ENCODE measurements at regions of chr4 and their contacts with region 1.

Region 1: DNA sequence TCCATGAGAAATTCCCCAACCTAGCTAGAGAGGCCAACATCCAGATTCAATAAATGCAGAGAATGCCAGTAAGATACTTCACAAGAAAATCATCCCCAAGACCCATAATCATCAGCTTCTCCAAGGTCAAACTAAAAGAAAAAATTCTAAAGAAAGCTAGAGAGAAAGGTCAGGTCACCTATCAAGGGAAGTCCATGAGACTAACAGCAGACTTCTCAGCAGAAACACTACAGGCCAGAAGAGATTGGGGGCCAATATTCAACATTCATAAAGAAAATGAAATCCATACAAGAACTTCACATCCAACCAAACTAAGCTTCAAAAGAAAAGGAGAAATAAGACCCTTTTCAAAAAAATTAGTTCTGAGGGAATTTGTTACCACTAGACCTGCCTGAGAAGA is 118.8 kb upstream of the ANXA10 start:
- DNase-seq: no peak
- H3K4me3 ChIP-seq: no peak overlapping the region
- H3K27ac ChIP-seq: no peak overlapping the region
- H3K4me1 ChIP-seq: no peaks in the 10 kb centered on the region
- H3K27me3 ChIP-seq: no peaks in the 10 kb centered on the region
- CTCF ChIP-seq: no peak
- POLR2A ChIP-seq: no peak

Region 2: DNA sequence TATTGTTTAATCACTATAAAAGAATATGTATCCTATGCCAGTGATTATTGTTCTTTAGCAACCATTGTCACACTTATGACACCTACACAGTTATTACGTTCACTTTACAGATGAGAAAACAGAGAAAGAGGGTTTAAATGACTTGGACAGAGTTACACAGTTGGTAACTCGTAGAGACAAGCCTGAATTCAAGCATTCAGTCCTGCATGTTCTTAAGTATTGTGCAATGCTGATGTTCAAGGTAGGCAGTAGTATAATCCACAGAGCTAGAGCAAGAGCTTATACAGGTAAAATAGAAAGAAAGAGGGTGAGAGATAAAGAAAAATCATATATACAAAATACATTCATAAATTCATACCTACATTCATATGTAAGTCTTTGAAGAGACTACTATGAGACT is 131.0 kb before region 1 on chr4:
- intact Hi-C with region 1: no loop called
- DNase-seq: no peak
- H3K4me3 ChIP-seq: no peak overlapping the region
- H3K27ac ChIP-seq: no peak overlapping the region
- H3K4me1 ChIP-seq: no peaks in the 10 kb centered on the region
- H3K27me3 ChIP-seq: no peaks in the 10 kb centered on the region
- CTCF ChIP-seq: no peak
- POLR2A ChIP-seq: no peak

Region 3: DNA sequence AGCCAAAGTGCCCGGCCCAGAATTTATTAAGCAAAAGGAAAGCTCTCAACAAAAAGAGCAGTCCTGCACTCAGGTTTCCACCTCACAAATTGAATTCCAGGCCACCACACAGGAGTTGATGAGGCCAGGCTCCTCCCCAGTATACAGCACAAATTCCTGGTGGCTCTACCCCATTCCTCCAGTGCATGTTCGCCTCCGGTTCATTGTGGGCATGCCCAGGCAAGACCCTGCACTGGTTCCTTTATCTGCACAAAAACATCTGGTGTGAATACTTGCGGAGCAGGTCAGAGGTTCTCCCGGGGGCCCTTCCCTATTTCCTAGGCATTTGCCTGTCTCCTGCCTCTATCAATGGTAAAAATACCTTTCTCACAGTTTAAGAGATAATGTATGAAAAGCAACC is 76.4 kb before region 1 on chr4:
- intact Hi-C with region 1: no loop called
- DNase-seq: peak; percentile 37
- H3K4me3 ChIP-seq: no peak overlapping the region
- H3K27ac ChIP-seq: no peak overlapping the region
- H3K4me1 ChIP-seq: no peaks in the 10 kb centered on the region
- H3K27me3 ChIP-seq: no peaks in the 10 kb centered on the region
- CTCF ChIP-seq: no peak
- POLR2A ChIP-seq: no peak

Region 4: DNA sequence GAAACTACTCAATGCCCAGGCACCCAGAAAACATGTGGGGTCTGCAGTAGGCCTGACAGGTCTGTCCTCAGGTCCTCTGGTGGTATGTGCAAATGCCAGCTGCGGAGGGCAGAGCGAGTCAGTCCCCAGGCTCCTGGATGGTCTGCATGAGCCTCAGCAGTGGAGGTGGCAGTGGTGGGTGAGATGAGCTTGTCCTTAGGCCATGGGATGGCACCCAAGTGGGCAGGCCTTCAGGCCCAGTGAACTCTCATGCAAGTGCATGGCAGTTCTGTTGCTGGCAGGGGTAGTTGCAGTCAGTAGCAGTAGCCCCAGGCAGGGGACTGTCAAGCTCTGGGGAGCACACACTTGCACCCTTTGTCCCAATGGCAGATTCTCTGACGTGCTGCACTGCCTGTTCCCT is 12.5 kb after region 1 on chr4:
- intact Hi-C with region 1: loop called (anchors 1 kb)
- DNase-seq: no peak
- H3K4me3 ChIP-seq: no peak overlapping the region
- H3K27ac ChIP-seq: no peak overlapping the region
- H3K4me1 ChIP-seq: no peaks in the 10 kb centered on the region
- H3K27me3 ChIP-seq: no peaks in the 10 kb centered on the region
- CTCF ChIP-seq: no peak
- POLR2A ChIP-seq: no peak